Left cardiac atrium (tissue), 4 donors: ENCODE measurements at regions of chr17 and their contacts with region 1.

Region 1: GRCh38 chr17:78421484-78422266 is 43.2 kb downstream of the PGS1 start:
- DNase-seq: peak; percentile 79
- ATAC-seq: peak; percentile 61 to 67

Region 2: GRCh38 chr17:78250891-78251794 is 170.5 kb before region 1 on chr17:
- intact Hi-C with region 1: loop called in 1 of 2 experiments (anchors 5 kb)
- DNase-seq: peak; percentile 87
- ATAC-seq: peak; percentile 75 to 78

Region 3: GRCh38 chr17:78289802-78290363 is 131.8 kb before region 1 on chr17:
- intact Hi-C with region 1: loop called (anchors 2 to 5 kb)
- DNase-seq: peak; percentile 85
- ATAC-seq: peak; percentile 94

Region 4: GRCh38 chr17:78360371-78361224 is 61.1 kb before region 1 on chr17:
- intact Hi-C with region 1: loop called (anchors 1 to 5 kb)
- DNase-seq: peak; percentile 94
- ATAC-seq: peak; percentile 66 to 75

Region 5: DNA sequence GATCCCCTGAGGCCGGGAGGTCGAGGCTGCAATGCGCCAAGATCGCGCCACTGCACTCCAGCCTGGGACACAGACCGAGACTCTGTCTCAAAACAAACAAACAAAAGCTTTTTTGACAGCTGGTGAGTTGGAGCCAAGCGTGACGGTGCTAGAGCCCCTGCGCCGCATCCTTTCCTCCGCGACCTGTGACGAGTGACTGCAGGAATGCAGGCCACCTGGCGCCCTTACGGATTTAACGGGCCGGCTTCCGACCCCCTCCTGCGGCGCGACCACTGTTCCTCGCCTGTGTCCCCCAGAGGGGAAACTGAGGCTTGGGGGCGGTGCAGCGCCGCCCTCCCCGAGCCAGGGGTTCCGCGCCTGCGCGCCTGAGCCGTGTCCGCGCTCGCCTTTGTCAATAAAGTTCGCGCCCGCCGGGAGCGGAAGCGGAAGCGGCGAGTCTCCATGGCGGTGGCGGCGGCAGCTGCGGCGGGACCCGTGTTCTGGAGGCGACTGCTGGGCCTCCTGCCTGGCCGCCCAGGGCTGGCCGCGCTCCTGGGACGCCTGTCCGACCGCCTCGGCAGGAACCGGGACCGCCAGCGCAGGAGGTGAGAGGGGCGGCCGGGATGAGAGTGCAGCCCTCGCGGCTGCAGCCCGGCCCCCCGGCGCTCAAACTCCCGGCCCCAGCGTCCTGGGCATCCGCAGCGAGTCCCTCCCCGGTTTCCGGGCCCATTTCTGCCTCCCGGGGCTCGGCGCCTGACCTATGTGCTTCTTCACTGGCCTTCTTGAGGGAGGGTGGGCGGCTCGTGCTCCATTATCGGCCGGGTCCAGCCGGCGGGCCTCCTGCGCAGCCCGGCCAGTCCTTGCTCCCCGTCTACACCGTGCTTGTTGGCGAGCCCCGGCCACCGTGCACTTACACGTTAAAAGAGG is 43.2 kb before region 1 on chr17 and contains the start of gene PGS1:
- intact Hi-C with region 1: no loop called
- DNase-seq: peak; percentile 87
- ATAC-seq: peak; percentile 86 to 91
- total RNA-seq, gene PGS1: 17.7 to 24.3 TPM